ENCODE measurements at regions of chr17 and their contacts with region 1.

Region 1: GRCh38 chr17:7561028-7561575 is 617 bp upstream of the SENP3 start:
- DNase-seq: no peak
- ATAC-seq: peak; percentile 84
- H3K4me3 ChIP-seq: peak overlapping the region; percentile 92
- H3K27ac ChIP-seq: peak overlapping the region; percentile 23
- H3K4me1 ChIP-seq: peaks cover 37% of the 10 kb centered on the region
- H3K27me3 ChIP-seq: no peaks in the 10 kb centered on the region
- CTCF ChIP-seq: peak; percentile 93 to 99 (median 93); a peak in 5 of 6 replicates
- EP300 ChIP-seq: no peak
- POLR2A ChIP-seq: no peak
- RAD21 ChIP-seq: peak; percentile 74

Region 2: GRCh38 chr17:7351665-7352501 is 209.2 kb before region 1 on chr17 and contains the start of gene KCTD11:
- CTCF ChIA-PET with region 1: interaction called, 47 read pairs
- POLR2A ChIA-PET with region 1: interaction called, 3 read pairs
- RAD21 ChIA-PET with region 1: interaction called, 31 read pairs
- SMC1A ChIA-PET with region 1: interaction called, 10 read pairs
- in situ Hi-C with region 1: no loop called
- intact Hi-C with region 1: loop called (anchors 2 kb)
- DNase-seq: no peak
- ATAC-seq: peak; percentile 81
- H3K4me3 ChIP-seq: peak within 1 kb of the TSS; percentile 88
- H3K27ac ChIP-seq: peak within 1 kb of the TSS; percentile 59
- H3K4me1 ChIP-seq: peaks cover 23% of the 10 kb centered on the region
- H3K27me3 ChIP-seq: no peaks in the 10 kb centered on the region
- CTCF ChIP-seq: peak in 2 of 3 experiments; percentile 55 to 59; a peak in 3 of 6 replicates
- EP300 ChIP-seq: no peak
- POLR2A ChIP-seq: peak; percentile 81
- RAD21 ChIP-seq: 0 out of 2 replicates have a peak, but pooled peaks have one; percentile 27
- polyA plus RNA-seq, gene KCTD11: 0.05 to 0.09 TPM

Region 3: DNA sequence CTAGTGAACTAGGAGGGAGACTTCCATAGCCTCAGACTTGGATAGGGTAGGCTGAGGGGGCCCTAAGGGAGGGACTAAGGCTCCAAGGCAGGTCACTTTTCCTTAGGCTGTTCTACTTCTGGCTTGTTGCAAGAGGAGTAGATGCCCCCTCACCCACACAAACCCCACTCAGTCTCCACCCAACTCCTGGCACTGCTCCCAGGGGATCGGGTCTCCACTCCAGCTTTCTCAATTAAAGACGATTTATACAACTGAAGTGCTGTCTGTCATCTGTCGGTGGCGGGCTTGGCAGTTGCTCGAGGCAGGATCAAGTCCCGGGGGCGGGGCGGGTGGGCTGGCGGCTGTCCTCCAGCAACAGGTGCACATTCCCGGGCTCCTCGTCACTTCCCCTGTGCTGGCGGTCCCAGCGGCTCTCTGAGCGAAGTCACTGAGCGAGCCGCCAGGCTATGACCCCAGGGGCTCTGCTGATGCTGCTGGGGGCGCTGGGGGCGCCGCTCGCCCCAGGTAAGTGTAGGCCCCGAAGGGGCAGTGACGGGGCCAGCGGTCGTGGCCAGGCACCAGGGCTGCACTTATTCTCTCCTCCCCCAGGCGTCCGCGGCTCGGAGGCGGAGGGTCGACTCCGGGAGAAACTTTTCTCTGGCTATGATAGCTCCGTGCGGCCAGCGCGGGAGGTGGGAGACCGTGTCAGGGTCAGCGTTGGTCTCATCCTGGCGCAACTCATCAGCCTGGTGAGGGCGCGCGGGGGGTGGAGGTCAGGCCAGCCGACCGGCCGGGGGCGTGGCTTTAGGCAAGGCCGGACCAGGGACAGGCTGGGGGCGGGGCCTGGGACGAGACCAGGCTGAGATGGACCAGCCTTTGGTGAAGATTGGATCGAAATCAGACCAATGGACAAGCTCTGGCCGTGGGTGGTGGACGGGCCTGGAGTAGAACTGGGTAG is 116.2 kb before region 1 on chr17 and contains the start of gene CHRNB1:
- CTCF ChIA-PET with region 1: interaction called, 16 read pairs
- POLR2A ChIA-PET with region 1: interaction called, 12 read pairs
- RAD21 ChIA-PET with region 1: interaction called, 12 read pairs
- SMC1A ChIA-PET with region 1: interaction called, 7 read pairs
- in situ Hi-C with region 1: no loop called
- intact Hi-C with region 1: no loop called
- DNase-seq: no peak
- ATAC-seq: peak; percentile 71
- H3K4me3 ChIP-seq: peak within 1 kb of the TSS; percentile 55; the same call in 1 of the 2 replicates
- H3K27ac ChIP-seq: no peak within 1 kb of the TSS
- H3K4me1 ChIP-seq: peaks cover 16% of the 10 kb centered on the region
- H3K27me3 ChIP-seq: peaks cover 1 to 5% of the 10 kb centered on the region in 2 experiments; a peak in 3 of 4 replicates
- CTCF ChIP-seq: peak in 1 of 3 experiments; percentile 11; a peak in 1 of 6 replicates
- EP300 ChIP-seq: no peak
- POLR2A ChIP-seq: no peak
- RAD21 ChIP-seq: no peak
- polyA plus RNA-seq, gene CHRNB1: 13.2 to 14.8 TPM

Region 4: GRCh38 chr17:7515911-7516610 is 45.0 kb before region 1 on chr17:
- CTCF ChIA-PET with region 1: interaction called, 192 read pairs
- POLR2A ChIA-PET with region 1: interaction called, 36 read pairs
- RAD21 ChIA-PET with region 1: interaction called, 84 read pairs
- SMC1A ChIA-PET with region 1: interaction called, 67 read pairs
- in situ Hi-C with region 1: no loop called
- intact Hi-C with region 1: loop called (anchors 1 kb)
- DNase-seq: no peak
- ATAC-seq: no peak
- H3K4me3 ChIP-seq: no peak overlapping the region
- H3K27ac ChIP-seq: no peak overlapping the region
- H3K4me1 ChIP-seq: no peaks in the 10 kb centered on the region
- H3K27me3 ChIP-seq: no peaks in the 10 kb centered on the region
- CTCF ChIP-seq: no peak
- EP300 ChIP-seq: no peak
- POLR2A ChIP-seq: no peak
- RAD21 ChIP-seq: no peak

Region 5: DNA sequence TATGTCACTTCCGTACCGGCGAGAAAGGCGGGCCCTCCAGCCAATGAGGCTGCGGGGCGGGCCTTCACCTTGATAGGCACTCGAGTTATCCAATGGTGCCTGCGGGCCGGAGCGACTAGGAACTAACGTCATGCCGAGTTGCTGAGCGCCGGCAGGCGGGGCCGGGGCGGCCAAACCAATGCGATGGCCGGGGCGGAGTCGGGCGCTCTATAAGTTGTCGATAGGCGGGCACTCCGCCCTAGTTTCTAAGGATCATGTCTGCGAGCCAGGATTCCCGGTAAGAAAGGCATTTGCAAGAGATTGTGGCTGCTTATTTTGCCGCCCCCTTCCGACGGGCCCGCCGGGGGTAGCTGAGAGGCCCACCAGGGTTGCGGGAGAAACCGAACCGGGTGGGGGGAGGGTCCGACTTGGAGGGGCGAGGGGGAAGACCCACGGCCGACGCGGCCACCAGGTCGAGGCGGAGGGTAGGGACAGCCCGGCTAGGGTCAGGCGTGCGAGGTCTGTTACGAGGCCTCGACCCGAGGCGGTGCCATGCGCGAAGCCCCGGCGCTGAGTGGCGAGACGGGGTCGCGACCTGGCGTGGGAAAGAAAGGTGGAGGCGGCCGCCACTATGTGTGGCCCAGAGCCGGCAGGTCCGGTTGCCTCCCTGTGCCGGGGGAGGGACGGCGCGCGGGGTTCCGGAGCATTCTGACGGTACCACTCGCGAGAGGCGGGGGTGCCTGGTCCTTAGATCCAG is 11.7 kb after region 1 on chr17:
- CTCF ChIA-PET with region 1: interaction called, 14 read pairs
- POLR2A ChIA-PET with region 1: no interaction called
- RAD21 ChIA-PET with region 1: interaction called, 8 read pairs
- SMC1A ChIA-PET with region 1: interaction called, 8 read pairs
- in situ Hi-C with region 1: no loop called
- intact Hi-C with region 1: loop called (anchors 1 kb)
- DNase-seq: peak; percentile 98
- ATAC-seq: peak; percentile 0
- H3K4me3 ChIP-seq: peak overlapping the region; percentile 93
- H3K27ac ChIP-seq: peak overlapping the region; percentile 97
- H3K4me1 ChIP-seq: peaks cover 21% of the 10 kb centered on the region
- H3K27me3 ChIP-seq: no peaks in the 10 kb centered on the region
- CTCF ChIP-seq: no peak
- EP300 ChIP-seq: no peak
- POLR2A ChIP-seq: peak; percentile 85
- RAD21 ChIP-seq: no peak

Region 6: DNA sequence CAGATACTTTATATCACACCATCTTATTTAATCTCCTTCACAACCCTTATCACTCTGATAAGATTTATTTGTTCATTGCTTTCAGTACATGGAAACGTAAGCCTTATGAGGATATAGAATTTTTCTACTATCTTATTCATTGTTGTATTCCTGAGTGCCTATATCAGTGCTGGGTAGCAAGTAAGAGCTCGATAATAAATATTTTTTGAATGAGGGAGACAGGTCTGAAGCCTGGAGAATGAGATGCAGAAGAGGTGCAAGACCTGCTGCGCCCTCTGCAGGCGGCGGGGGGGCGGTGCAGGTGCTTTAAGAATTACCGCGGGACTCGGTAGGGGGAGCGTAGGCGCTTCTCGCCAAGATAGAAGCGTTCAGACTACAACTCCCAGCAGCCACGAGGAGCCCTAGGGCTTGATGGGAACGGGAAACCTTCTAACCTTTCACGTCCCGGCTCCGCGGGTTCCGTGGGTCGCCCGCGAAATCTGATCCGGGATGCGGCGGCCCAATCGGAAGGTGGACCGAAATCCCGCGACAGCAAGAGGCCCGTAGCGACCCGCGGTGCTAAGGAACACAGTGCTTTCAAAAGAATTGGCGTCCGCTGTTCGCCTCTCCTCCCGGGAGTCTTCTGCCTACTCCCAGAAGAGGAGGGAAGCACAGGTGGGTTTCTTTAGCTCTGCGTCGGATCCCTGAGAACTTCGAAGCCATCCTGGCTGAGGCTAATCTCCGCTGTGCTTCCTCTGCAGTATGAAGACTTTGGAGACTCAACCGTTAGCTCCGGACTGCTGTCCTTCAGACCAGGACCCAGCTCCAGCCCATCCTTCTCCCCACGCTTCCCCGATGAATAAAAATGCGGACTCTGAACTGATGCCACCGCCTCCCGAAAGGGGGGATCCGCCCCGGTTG is 127.1 kb after region 1 on chr17 and contains the start of gene WRAP53:
- CTCF ChIA-PET with region 1: interaction called, 33 read pairs
- POLR2A ChIA-PET with region 1: interaction called, 14 read pairs
- RAD21 ChIA-PET with region 1: interaction called, 28 read pairs
- SMC1A ChIA-PET with region 1: interaction called, 17 read pairs
- in situ Hi-C with region 1: no loop called
- intact Hi-C with region 1: no loop called
- DNase-seq: peak; percentile 85
- ATAC-seq: peak; percentile 90
- H3K4me3 ChIP-seq: peak within 1 kb of the TSS; percentile 92
- H3K27ac ChIP-seq: peak within 1 kb of the TSS; percentile 100
- H3K4me1 ChIP-seq: peaks cover 12% of the 10 kb centered on the region
- H3K27me3 ChIP-seq: no peaks in the 10 kb centered on the region
- CTCF ChIP-seq: peak; percentile 97 to 99 (median 99)
- EP300 ChIP-seq: peak in 1 of 2 experiments; percentile 22; a peak in 1 of 4 replicates
- POLR2A ChIP-seq: peak; percentile 61
- RAD21 ChIP-seq: peak; percentile 78
- polyA plus RNA-seq, gene WRAP53: 1.9 to 5.3 TPM

Measured in GM12878 (cell line).